ENCODE measurements at regions of chr11 and their contacts with region 1.

Region 1: GRCh38 chr11:57567515-57568329 is at the start of gene UBE2L6:
- DNase-seq: peak; percentile 15 to 92 (median 80)

Region 2: GRCh38 chr11:57644748-57645688 is 77.3 kb after region 1 on chr11:
- intact Hi-C with region 1: loop called (anchors 5 kb)
- DNase-seq: peak; percentile 73 to 95 (median 87)

Region 3: DNA sequence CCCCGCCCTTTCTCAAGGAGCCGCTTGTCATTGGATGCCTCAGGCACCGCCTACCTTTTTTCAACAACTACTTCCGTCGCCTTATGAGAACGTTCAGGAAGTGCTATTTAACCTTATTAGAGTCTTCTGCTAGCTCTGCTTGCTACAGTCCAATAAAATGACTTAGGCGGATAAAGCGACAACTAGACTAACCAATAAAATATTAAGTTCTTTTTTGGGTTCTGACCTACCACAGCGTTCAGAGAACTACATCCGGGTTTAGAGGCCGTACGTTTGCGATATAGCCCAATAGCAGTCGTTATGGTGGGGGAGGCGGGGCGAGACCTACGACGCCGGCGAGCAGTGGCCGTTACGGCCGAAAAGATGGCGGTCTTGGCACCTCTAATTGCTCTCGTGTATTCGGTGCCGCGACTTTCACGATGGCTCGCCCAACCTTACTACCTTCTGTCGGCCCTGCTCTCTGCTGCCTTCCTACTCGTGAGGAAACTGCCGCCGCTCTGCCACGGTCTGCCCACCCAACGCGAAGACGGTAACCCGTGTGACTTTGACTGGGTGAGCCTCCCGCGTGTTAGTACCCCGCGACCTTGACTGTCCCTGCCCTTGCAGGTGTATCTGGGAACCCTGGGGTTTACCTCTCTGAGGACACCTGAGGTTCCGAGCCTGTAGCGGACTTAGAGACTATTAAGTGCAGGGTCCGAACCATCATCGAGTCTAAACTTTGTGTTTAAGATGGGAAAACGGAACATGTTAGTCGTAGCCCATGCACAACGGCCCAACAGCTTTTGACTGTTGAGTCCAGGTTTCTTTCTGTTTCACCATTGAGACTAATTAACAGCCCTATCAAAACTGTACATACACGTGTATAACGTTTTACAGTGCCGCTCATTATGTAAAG is 144.8 kb after region 1 on chr11 and contains the start of gene TMX2:
- intact Hi-C with region 1: loop called (anchors 10 kb)
- DNase-seq: peak; percentile 88 to 98 (median 95)

Measured in head of caudate nucleus (tissue), 42 donors.